Mucosa of descending colon (tissue), 3 donors: ENCODE measurements at regions of chr9 and their contacts with region 1.

Region 1: GRCh38 chr9:70111042-70111602 is 67.5 kb downstream of the MAMDC2 start:
- DNase-seq: peak; percentile 72 to 83 (median 81)
- ATAC-seq: peak; percentile 82
- H3K4me3 ChIP-seq: no peak overlapping the region
- H3K4me1 ChIP-seq: peaks cover 3% of the 10 kb centered on the region
- CTCF ChIP-seq: peak; percentile 88

Region 2: GRCh38 chr9:69971643-69972449 is 139.3 kb before region 1 on chr9:
- intact Hi-C with region 1: loop called in 1 of 2 experiments (anchors 5 kb)
- DNase-seq: peak; percentile 52 to 83 (median 77)
- ATAC-seq: peak; percentile 57
- H3K4me3 ChIP-seq: no peak overlapping the region
- H3K4me1 ChIP-seq: no peaks in the 10 kb centered on the region
- CTCF ChIP-seq: peak; percentile 53

Region 3: DNA sequence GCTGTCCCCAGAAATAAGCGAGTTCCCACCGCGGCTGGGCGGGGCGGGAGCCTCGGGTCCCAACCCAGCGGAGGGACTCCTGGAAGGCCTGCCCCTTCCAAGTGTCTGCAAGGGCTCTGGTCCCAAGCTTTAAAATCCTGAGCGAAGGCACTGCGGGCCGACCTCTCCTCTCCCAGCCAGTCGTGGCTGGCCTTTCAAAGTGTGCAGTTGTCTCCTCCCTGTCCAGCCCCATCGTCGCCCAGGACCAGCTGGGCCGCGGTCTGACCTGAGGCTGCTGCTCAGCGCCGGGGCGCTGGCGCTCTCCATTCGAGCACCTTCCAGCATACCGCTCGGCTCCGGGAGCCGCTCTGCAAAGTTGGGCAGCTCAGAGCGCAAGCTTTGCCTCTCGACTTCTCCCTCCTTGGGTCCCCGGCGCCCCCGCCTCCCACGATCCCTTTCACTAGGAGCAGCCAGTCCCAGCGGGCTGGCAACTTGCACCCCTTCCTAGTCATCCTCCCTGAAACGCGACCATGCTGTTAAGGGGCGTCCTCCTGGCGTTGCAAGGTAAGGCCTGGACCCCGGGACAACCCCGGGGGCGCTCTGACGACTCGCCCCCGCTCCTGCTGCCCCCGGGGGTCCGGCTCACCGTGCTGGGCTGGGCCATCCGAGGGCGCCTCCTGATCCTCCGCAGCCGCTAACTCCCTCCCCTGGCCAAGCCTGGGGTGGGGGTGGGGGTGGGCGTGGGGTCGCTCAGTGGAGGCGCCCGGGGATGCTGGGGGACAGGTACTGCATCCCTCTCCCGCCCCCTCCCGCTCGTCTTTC is 67.2 kb before region 1 on chr9 and contains the start of gene MAMDC2:
- intact Hi-C with region 1: loop called in 1 of 2 experiments (anchors 10 kb)
- DNase-seq: peak; percentile 25 to 51 (median 45)
- ATAC-seq: peak; percentile 69
- H3K4me3 ChIP-seq: peak within 1 kb of the TSS; percentile 17
- H3K4me1 ChIP-seq: no peaks in the 10 kb centered on the region
- CTCF ChIP-seq: no peak
- total RNA-seq, gene MAMDC2: 3.5 to 70.6 (median 6.9) TPM

Region 4: GRCh38 chr9:70250221-70250620 is 139.1 kb after region 1 on chr9:
- intact Hi-C with region 1: no loop called
- DNase-seq: no peak
- ATAC-seq: no peak
- H3K4me3 ChIP-seq: no peak overlapping the region
- H3K4me1 ChIP-seq: no peaks in the 10 kb centered on the region
- CTCF ChIP-seq: no peak